Activated naive CD4-positive, alpha-beta T cell treated with anti-CD3 and anti-CD28 coated beads for 36 hours (primary cell): ENCODE measurements at regions of chr11 and their contacts with region 1.

Region 1: DNA sequence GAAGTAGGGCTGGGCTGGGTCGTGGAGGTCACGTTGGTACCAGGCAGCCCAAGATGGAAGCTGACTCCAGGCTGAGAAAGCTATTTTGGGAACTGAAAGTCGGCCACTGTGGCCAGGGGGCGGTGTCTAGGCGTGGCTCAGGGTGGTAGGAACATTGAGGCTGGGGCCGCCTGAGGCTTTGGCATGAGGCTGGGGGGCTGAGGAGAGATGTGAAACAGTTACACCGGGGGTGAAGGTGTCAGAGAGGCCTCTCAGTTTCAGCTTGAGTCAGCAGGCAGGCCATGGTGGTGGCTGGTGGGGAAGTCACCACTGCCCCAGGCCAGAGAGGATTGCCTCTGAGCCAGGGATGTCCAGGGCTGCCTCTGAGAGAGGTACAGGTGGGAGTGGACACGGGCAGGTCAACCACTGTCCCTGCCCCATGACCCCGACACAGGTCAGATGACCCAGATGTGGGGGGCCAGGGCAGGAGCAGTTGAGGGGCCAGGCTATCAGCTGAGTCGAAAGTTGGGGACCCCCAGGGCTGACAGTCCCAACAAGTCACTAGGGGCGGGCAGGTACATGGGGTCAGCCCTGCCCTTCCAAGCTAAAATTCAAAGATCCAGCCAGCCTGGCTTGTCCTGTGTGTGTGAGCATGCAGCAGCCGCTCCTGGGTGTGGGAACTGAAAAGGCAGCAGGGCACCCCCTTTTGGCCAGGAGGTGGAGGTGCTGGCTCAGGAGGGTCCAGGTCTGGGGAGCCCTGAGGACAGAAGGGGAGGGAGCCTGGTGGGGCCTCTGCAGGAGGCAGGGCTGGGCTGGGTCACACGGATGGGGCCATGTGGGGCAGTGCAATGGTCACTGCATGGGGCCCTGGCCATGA is 7.2 kb downstream of the KCNK7 start:
- DNase-seq: peak; percentile 86
- H3K4me3 Mint-ChIP-seq: no peak overlapping the region
- H3K27ac Mint-ChIP-seq: peak overlapping the region; percentile 90
- H3K4me1 Mint-ChIP-seq: peaks cover 29% of the 10 kb centered on the region
- H3K27me3 Mint-ChIP-seq: no peaks in the 10 kb centered on the region

Region 2: DNA sequence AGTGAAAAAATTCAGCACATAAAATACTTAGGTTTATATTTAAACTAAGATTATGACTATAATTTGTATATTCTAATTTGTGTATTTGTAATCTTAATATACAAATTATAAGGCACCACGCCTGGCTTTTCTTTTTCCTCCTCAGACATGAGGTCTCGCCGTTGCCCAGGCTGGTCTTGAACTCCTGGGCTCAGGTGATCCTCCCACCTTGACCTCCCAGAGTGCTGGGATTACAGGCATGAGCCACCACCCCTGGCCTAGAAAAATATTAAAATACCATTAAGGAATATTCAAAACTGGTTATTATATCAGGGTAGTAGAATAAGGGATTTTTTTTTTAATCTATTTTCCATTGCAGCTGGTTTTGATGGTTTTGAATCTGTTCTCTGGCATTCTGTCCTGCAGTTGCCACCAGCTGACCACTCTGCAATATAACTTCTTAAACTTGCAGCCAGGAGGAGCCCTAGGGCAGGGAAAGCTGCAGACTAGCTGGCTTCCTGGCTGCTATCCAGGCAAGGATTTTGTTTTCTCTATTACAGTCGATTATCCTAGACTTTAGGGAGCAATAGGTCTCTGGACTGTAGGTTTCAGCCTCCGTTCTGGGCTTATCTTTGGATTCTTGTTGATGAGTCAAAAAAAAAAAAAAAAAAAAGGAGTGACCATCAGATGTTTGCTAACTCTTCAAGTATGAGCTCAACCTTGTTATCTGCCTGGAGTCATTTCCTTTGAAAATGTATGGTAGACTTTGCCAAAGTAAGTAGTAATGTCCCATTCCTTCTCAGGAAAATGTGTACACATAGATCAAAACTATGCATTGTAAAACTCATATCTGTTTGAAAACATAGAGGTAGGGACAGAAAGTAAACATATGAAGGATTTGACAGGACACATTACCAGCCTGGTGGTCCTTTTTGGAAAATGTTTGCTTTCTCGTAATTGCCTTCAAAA is 313.4 kb before region 1 on chr11:
- CTCF ChIA-PET with region 1: interaction called, 10 read pairs
- intact Hi-C with region 1: no loop called
- DNase-seq: peak; percentile 53
- H3K4me3 Mint-ChIP-seq: no peak overlapping the region
- H3K27ac Mint-ChIP-seq: no peak overlapping the region
- H3K4me1 Mint-ChIP-seq: peaks cover 15% of the 10 kb centered on the region
- H3K27me3 Mint-ChIP-seq: no peaks in the 10 kb centered on the region

Region 3: GRCh38 chr11:65341856-65342255 is 246.6 kb before region 1 on chr11:
- CTCF ChIA-PET with region 1: no interaction called
- intact Hi-C with region 1: no loop called
- DNase-seq: no peak
- H3K4me3 Mint-ChIP-seq: no peak overlapping the region
- H3K27ac Mint-ChIP-seq: no peak overlapping the region
- H3K4me1 Mint-ChIP-seq: peaks cover 19% of the 10 kb centered on the region
- H3K27me3 Mint-ChIP-seq: no peaks in the 10 kb centered on the region

Region 4: GRCh38 chr11:65366340-65366773 is 222.1 kb before region 1 on chr11:
- CTCF ChIA-PET with region 1: no interaction called
- intact Hi-C with region 1: loop called (anchors 1 kb)
- DNase-seq: peak; percentile 46
- H3K4me3 Mint-ChIP-seq: no peak overlapping the region
- H3K27ac Mint-ChIP-seq: no peak overlapping the region
- H3K4me1 Mint-ChIP-seq: peaks cover 4% of the 10 kb centered on the region
- H3K27me3 Mint-ChIP-seq: no peaks in the 10 kb centered on the region

Region 5: GRCh38 chr11:65530157-65530496 is 58.3 kb before region 1 on chr11:
- CTCF ChIA-PET with region 1: interaction called, 12 read pairs
- intact Hi-C with region 1: no loop called
- DNase-seq: no peak
- H3K4me3 Mint-ChIP-seq: no peak overlapping the region
- H3K27ac Mint-ChIP-seq: no peak overlapping the region
- H3K4me1 Mint-ChIP-seq: peaks cover 35% of the 10 kb centered on the region
- H3K27me3 Mint-ChIP-seq: no peaks in the 10 kb centered on the region

Region 6: GRCh38 chr11:65575568-65576231 is 12.7 kb before region 1 on chr11 and contains the start of gene EHBP1L1:
- CTCF ChIA-PET with region 1: interaction called, 46 read pairs
- intact Hi-C with region 1: loop called (anchors 1 kb)
- DNase-seq: peak; percentile 79
- H3K4me3 Mint-ChIP-seq: peak within 1 kb of the TSS; percentile 91
- H3K27ac Mint-ChIP-seq: peak within 1 kb of the TSS; percentile 85
- H3K4me1 Mint-ChIP-seq: peaks cover 54% of the 10 kb centered on the region
- H3K27me3 Mint-ChIP-seq: no peaks in the 10 kb centered on the region
- total RNA-seq, gene EHBP1L1: 51.9 to 54.6 TPM